Activated B cell treated with CpG ODN at 0.5 μM for 24 hours (primary cell): ENCODE measurements at regions of chr7 and their contacts with region 1.

Region 1: DNA sequence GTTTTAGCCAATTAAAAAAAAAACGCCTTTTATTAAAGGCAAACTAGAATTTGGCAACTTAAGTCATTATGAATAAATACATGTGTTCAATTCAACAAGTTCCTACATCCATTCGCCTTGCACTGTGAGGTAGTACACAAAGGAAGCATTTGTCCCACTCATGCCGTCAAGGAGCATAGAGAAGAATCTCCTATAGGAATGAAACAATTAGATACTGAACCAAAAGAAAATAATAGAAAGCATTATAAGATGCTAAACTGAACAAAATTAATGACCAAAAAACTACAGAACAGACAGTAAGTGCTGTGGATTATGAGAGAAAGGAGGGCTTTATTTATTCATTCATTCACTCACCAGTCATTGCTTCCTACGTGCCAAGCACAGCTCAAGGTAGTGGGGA is 42.2 kb downstream of the SNX13 start:
- DNase-seq: no peak
- ATAC-seq: no peak
- H3K4me3 Mint-ChIP-seq: no peak overlapping the region
- H3K27ac Mint-ChIP-seq: no peak overlapping the region
- H3K4me1 Mint-ChIP-seq: peaks cover 1% of the 10 kb centered on the region
- H3K27me3 Mint-ChIP-seq: no peaks in the 10 kb centered on the region
- CTCF ChIP-seq: no peak

Region 2: DNA sequence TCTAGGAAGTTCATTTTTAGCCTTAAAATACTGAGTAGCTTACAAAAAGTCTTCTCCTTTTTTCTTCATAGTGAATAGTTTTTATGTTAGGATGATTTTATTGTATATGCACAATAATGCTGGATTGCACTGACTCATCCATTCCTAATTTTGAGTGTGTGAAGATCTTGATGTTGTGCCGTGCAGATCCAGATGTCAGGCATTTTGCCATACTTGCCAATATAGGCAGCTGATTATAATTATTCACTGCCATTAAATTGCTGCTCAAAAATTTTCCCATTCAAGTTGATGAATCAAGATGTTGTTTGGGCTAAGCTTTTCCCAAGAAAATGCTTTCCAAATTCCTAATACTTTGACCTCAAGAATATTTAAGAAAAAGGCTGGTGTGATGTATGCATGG is 381.3 kb before region 1 on chr7:
- CTCF ChIA-PET with region 1: no interaction called
- POLR2A ChIA-PET with region 1: no interaction called
- intact Hi-C with region 1: no loop called
- DNase-seq: no peak
- ATAC-seq: no peak
- H3K4me3 Mint-ChIP-seq: no peak overlapping the region
- H3K27ac Mint-ChIP-seq: no peak overlapping the region
- H3K4me1 Mint-ChIP-seq: no peaks in the 10 kb centered on the region
- H3K27me3 Mint-ChIP-seq: no peaks in the 10 kb centered on the region
- CTCF ChIP-seq: no peak

Region 3: DNA sequence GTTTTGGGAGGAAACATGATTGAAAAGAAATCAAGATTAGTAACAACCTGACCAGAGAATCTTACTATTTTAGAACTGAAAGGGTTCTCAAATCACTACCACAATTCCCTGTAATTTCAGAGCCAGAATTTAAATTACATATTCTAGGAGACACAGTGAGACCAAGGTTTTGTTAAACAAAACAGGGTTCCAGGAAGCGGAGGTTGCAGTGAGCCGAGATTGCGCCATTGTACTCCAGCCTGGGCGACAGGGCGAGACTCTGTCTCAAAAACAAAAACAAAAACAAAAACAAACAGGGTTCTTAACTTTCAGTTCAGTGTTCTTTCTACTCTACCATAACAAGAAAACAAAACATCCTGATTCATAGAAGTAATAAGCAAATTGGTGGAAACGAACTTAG is 15.4 kb before region 1 on chr7:
- CTCF ChIA-PET with region 1: no interaction called
- POLR2A ChIA-PET with region 1: no interaction called
- intact Hi-C with region 1: loop called (anchors 2 kb)
- DNase-seq: no peak
- ATAC-seq: no peak
- H3K4me3 Mint-ChIP-seq: no peak overlapping the region
- H3K27ac Mint-ChIP-seq: no peak overlapping the region
- H3K4me1 Mint-ChIP-seq: no peaks in the 10 kb centered on the region
- H3K27me3 Mint-ChIP-seq: no peaks in the 10 kb centered on the region
- CTCF ChIP-seq: no peak